ENCODE measurements at regions of chr10 and their contacts with region 1.

Region 1: GRCh38 chr10:69425511-69426298 is 9.0 kb upstream of the TACR2 start:
- H3K4me3 ChIP-seq: no peak overlapping the region
- H3K27ac ChIP-seq: no peak overlapping the region
- H3K4me1 ChIP-seq: no peaks in the 10 kb centered on the region; the same call in 1 of the 2 replicates
- CTCF ChIP-seq: no peak

Region 2: GRCh38 chr10:69312533-69312932 is 113.2 kb before region 1 on chr10:
- CTCF ChIA-PET with region 1: no interaction called
- POLR2A ChIA-PET with region 1: no interaction called
- H3K4me3 ChIP-seq: no peak overlapping the region
- H3K27ac ChIP-seq: no peak overlapping the region
- H3K4me1 ChIP-seq: no peaks in the 10 kb centered on the region
- CTCF ChIP-seq: no peak

Region 3: GRCh38 chr10:69340731-69341130 is 85.0 kb before region 1 on chr10:
- CTCF ChIA-PET with region 1: no interaction called
- POLR2A ChIA-PET with region 1: interaction called, 10 read pairs
- H3K4me3 ChIP-seq: no peak overlapping the region
- H3K27ac ChIP-seq: no peak overlapping the region
- H3K4me1 ChIP-seq: peaks cover 6% of the 10 kb centered on the region
- CTCF ChIP-seq: no peak

Region 4: GRCh38 chr10:69400936-69401335 is 24.8 kb before region 1 on chr10:
- CTCF ChIA-PET with region 1: no interaction called
- POLR2A ChIA-PET with region 1: no interaction called
- H3K4me3 ChIP-seq: no peak overlapping the region
- H3K27ac ChIP-seq: no peak overlapping the region
- H3K4me1 ChIP-seq: no peaks in the 10 kb centered on the region
- CTCF ChIP-seq: no peak

Region 5: GRCh38 chr10:69458426-69459108 is 32.9 kb after region 1 on chr10:
- CTCF ChIA-PET with region 1: no interaction called
- POLR2A ChIA-PET with region 1: no interaction called
- H3K4me3 ChIP-seq: no peak overlapping the region
- H3K27ac ChIP-seq: no peak overlapping the region
- H3K4me1 ChIP-seq: peaks cover 3% of the 10 kb centered on the region; the same call in 1 of the 2 replicates
- CTCF ChIP-seq: no peak

Region 6: GRCh38 chr10:69506834-69507721 is 81.4 kb after region 1 on chr10:
- CTCF ChIA-PET with region 1: interaction called, 13 read pairs
- POLR2A ChIA-PET with region 1: no interaction called
- H3K4me3 ChIP-seq: no peak overlapping the region
- H3K27ac ChIP-seq: no peak overlapping the region
- H3K4me1 ChIP-seq: no peaks in the 10 kb centered on the region
- CTCF ChIP-seq: no peak

Measured in HEK293 (cell line).